Endothelial cell of umbilical vein (primary cell): ENCODE measurements at regions of chr10 and their contacts with region 1.

Region 1: GRCh38 chr10:58299580-58299979 is 30.6 kb downstream of the CISD1 start:
- DNase-seq: peak; percentile 59
- H3K4me3 ChIP-seq: no peak overlapping the region
- H3K27ac ChIP-seq: no peak overlapping the region
- H3K4me1 ChIP-seq: no peaks in the 10 kb centered on the region
- H3K27me3 ChIP-seq: peaks cover 4 to 9% of the 10 kb centered on the region in 2 experiments
- CTCF ChIP-seq: peak; percentile 66 to 75
- POLR2A ChIP-seq: no peak

Region 2: GRCh38 chr10:58177362-58177947 is 122.1 kb before region 1 on chr10:
- CTCF ChIA-PET with region 1: interaction called, 281 read pairs
- POLR2A ChIA-PET with region 1: no interaction called
- dilution Hi-C with region 1: no loop called
- intact Hi-C with region 1: no loop called
- DNase-seq: peak; percentile 44
- H3K4me3 ChIP-seq: no peak overlapping the region
- H3K27ac ChIP-seq: no peak overlapping the region
- H3K4me1 ChIP-seq: no peaks in the 10 kb centered on the region
- H3K27me3 ChIP-seq: peaks cover 0 to 3% of the 10 kb centered on the region in 2 experiments
- CTCF ChIP-seq: peak; percentile 32 to 33
- POLR2A ChIP-seq: no peak

Region 3: DNA sequence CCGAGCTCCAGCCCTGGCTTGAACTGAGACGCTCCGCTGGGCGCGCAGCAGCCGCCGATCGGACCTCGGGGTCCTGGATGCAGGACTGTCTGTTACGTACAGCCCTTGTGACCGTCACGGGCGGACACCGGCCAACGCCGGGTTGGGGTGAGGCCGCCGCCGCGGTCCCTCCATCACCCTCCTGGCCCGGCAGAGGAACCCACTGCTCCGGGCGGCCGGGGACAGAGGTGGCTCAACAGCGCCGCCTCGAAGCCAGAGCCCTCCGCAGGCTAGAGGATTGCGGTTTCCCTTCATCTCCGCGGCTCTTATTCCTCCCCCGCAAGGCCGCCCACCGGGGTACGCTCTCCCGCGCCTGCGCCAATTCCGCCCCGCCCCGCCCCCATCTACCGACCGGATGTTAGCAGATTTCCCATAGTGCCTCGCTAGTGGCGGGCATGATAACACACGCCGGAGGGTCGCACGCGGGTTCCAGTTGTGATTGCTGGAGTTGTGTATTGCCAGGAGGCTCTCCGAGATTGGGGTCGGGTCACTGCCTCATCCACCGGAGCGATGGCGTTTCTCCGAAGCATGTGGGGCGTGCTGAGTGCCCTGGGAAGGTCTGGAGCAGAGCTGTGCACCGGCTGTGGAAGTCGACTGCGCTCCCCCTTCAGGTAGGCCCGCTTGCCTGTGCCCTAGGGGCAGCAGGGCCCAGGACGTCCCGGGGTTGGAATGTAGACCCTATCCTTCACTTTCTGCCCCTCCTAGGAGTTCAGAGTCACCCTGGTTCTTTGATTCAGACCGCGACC is 85.6 kb after region 1 on chr10 and contains the start of gene TFAM:
- CTCF ChIA-PET with region 1: interaction called, 40 read pairs
- POLR2A ChIA-PET with region 1: no interaction called
- dilution Hi-C with region 1: no loop called
- intact Hi-C with region 1: loop called (anchors 1 kb)
- DNase-seq: peak; percentile 97
- H3K4me3 ChIP-seq: peak within 1 kb of the TSS; percentile 55 to 90 (median 64)
- H3K27ac ChIP-seq: peak within 1 kb of the TSS; percentile 26
- H3K4me1 ChIP-seq: peaks cover 16% of the 10 kb centered on the region
- H3K27me3 ChIP-seq: no peaks in the 10 kb centered on the region
- CTCF ChIP-seq: peak; percentile 59 to 74
- POLR2A ChIP-seq: peak; percentile 92
- total RNA-seq, gene TFAM: 45.1 and 53.0 TPM in 2 replicates

Region 4: GRCh38 chr10:58393317-58393716 is 93.7 kb after region 1 on chr10:
- CTCF ChIA-PET with region 1: interaction called, 23 read pairs
- POLR2A ChIA-PET with region 1: no interaction called
- dilution Hi-C with region 1: no loop called
- intact Hi-C with region 1: loop called (anchors 2 kb)
- DNase-seq: peak; percentile 5
- H3K4me3 ChIP-seq: no peak overlapping the region
- H3K27ac ChIP-seq: no peak overlapping the region
- H3K4me1 ChIP-seq: no peaks in the 10 kb centered on the region
- H3K27me3 ChIP-seq: no peaks in the 10 kb centered on the region
- CTCF ChIP-seq: no peak
- POLR2A ChIP-seq: no peak

Region 5: GRCh38 chr10:58513188-58514110 is 213.9 kb after region 1 on chr10:
- CTCF ChIA-PET with region 1: no interaction called
- POLR2A ChIA-PET with region 1: no interaction called
- dilution Hi-C with region 1: no loop called
- intact Hi-C with region 1: loop called (anchors 10 kb)
- DNase-seq: peak; percentile 7
- H3K4me3 ChIP-seq: peak overlapping the region; percentile 23 to 35 (median 29)
- H3K27ac ChIP-seq: no peak overlapping the region
- H3K4me1 ChIP-seq: peaks cover 10% of the 10 kb centered on the region
- H3K27me3 ChIP-seq: peaks cover 16 to 55% of the 10 kb centered on the region in 2 experiments
- CTCF ChIP-seq: no peak
- POLR2A ChIP-seq: no peak

Region 6: GRCh38 chr10:58641095-58641531 is 341.5 kb after region 1 on chr10:
- CTCF ChIA-PET with region 1: interaction called, 3 read pairs
- POLR2A ChIA-PET with region 1: no interaction called
- dilution Hi-C with region 1: no loop called
- intact Hi-C with region 1: loop called (anchors 5 kb)
- DNase-seq: no peak
- H3K4me3 ChIP-seq: no peak overlapping the region
- H3K27ac ChIP-seq: no peak overlapping the region
- H3K4me1 ChIP-seq: peaks cover 2% of the 10 kb centered on the region
- H3K27me3 ChIP-seq: no peaks in the 10 kb centered on the region
- CTCF ChIP-seq: peak in 1 of 2 donors; percentile 3
- POLR2A ChIP-seq: no peak